Activated CD8-positive, alpha-beta memory T cell treated with anti-CD3 and anti-CD28 coated beads, Interleukin-2, amount 10 ng/mL, durations not matched to agents 7 days and 5 days (primary cell): ENCODE measurements at regions of chr15 and their contacts with region 1.

Region 1: DNA sequence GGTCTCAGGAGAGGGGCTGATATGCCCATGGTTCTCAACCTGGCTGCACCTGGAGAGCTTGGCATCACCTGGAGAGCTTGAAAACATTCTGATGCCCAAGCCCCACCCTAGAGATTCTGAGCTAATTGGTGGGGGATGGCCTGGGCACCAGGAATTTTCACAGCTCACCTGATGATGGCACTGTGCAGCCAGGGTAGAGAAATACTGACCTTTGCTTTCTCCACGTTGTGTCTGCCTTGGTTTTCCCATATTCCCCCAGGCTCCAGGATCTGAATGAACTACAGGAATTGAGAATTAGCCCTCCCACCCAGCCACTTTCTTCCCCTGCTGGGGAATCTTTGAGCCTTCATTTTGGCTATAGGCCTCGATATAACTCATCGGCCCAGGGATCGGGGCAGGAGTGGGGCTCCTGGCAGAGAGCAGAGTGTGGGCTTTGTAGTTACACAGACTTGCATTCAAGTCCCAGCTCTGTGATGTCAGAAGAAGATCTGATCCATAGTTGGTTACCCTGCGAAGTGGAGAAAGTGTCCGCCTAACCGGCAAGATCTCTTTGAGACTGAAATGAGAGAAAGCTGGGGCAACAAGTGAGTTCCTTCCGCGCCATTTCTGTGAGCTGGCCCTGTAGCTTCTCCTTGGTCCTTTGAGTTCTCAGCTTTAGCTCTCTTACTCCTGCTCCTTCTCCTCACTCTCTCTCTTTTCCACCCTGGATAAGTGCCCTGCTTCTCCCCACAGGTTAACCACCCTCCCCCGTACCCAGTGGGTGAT is 33.1 kb upstream of the UBE2Q2 start:
- DNase-seq: no peak
- ATAC-seq: peak; percentile 53
- H3K4me3 Mint-ChIP-seq: no peak overlapping the region
- H3K27ac Mint-ChIP-seq: no peak overlapping the region
- H3K4me1 Mint-ChIP-seq: peaks cover 2% of the 10 kb centered on the region
- H3K27me3 Mint-ChIP-seq: peaks cover 11% of the 10 kb centered on the region

Region 2: GRCh38 chr15:75823860-75824613 is 13.9 kb after region 1 on chr15:
- CTCF ChIA-PET with region 1: interaction called, 10 read pairs
- DNase-seq: no peak
- ATAC-seq: no peak
- H3K4me3 Mint-ChIP-seq: no peak overlapping the region
- H3K27ac Mint-ChIP-seq: no peak overlapping the region
- H3K4me1 Mint-ChIP-seq: peaks cover 16% of the 10 kb centered on the region
- H3K27me3 Mint-ChIP-seq: peaks cover 27% of the 10 kb centered on the region